ENCODE measurements at regions of chr18 and their contacts with region 1.

Region 1: GRCh38 chr18:79951578-79952455 is at the start of gene SLC66A2:
- DNase-seq: peak; percentile 83 to 94
- H3K4me3 ChIP-seq: peak within 1 kb of the TSS; percentile 83 to 95
- H3K27ac ChIP-seq: peak within 1 kb of the TSS; percentile 72 to 78
- H3K4me1 ChIP-seq: peaks cover 7 to 44% (median 31%) of the 10 kb centered on the region in 4 donors
- H3K27me3 ChIP-seq: no peaks in the 10 kb centered on the region
- CTCF ChIP-seq: no peak

Region 2: DNA sequence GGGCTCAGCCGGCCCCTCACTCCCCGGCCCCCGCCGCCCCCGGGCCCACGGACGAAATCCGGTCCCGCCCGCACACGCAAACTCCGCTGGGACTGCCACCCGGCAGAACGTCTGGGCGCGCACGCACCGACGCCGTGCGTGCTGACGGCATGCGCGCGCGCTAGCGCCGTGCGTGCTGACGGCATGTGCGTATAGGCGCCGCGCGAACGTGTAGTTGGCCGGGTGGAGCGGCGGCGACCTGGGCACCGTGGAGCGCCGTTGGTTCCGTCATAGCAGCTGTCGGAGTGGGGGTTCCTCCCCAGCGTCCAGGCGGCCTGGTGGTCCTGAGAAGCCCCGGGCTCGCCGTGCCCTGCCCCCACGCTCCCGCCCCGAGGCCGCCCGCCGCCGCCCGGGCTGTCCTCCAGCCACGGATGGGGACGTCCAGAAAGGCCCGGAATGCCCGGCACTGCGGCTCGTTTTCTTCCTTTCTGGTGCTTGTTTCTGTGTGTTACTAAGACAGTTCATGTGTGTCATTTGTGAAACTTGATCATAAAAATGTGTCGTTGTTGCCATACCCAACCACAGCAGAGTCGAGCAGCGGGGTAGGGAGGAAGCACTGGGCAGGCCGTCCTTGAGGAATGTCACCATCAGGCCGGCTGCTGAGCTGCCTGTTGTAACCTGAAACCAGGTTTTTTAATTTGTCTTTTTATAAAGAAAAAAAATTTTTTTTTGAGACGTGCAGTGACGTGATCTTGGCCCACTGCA is 36.8 kb after region 1 on chr18 and contains the start of gene TXNL4A:
- intact Hi-C with region 1: loop called (anchors 5 kb)
- DNase-seq: peak; percentile 73 to 89
- H3K4me3 ChIP-seq: peak within 1 kb of the TSS; percentile 85 to 96
- H3K27ac ChIP-seq: peak within 1 kb of the TSS; percentile 98
- H3K4me1 ChIP-seq: peaks cover 0 to 29% (median 22%) of the 10 kb centered on the region in 4 donors
- H3K27me3 ChIP-seq: no peaks in the 10 kb centered on the region
- CTCF ChIP-seq: no peak

Region 3: GRCh38 chr18:80108728-80109675 is 157.2 kb after region 1 on chr18 and contains the start of gene ADNP2:
- intact Hi-C with region 1: loop called (anchors 10 kb)
- DNase-seq: peak; percentile 84 to 94
- H3K4me3 ChIP-seq: peak within 1 kb of the TSS; percentile 63 to 69
- H3K27ac ChIP-seq: peak within 1 kb of the TSS; percentile 81 to 92
- H3K4me1 ChIP-seq: peaks cover 0 to 33% (median 17%) of the 10 kb centered on the region in 4 donors
- H3K27me3 ChIP-seq: no peaks in the 10 kb centered on the region
- CTCF ChIP-seq: no peak